Upper lobe of right lung (tissue), 1 donor: ENCODE measurements at regions of chr1 and their contacts with region 1.

Region 1: GRCh38 chr1:108828022-108828961 is 28.6 kb downstream of the AKNAD1 start:
- DNase-seq: peak; percentile 78
- ATAC-seq: peak; percentile 83
- H3K4me3 ChIP-seq: no peak overlapping the region
- H3K27ac ChIP-seq: peak overlapping the region; percentile 56
- H3K4me1 ChIP-seq: peaks cover 25% of the 10 kb centered on the region
- H3K27me3 ChIP-seq: no peaks in the 10 kb centered on the region
- CTCF ChIP-seq: peak; percentile 74

Region 2: DNA sequence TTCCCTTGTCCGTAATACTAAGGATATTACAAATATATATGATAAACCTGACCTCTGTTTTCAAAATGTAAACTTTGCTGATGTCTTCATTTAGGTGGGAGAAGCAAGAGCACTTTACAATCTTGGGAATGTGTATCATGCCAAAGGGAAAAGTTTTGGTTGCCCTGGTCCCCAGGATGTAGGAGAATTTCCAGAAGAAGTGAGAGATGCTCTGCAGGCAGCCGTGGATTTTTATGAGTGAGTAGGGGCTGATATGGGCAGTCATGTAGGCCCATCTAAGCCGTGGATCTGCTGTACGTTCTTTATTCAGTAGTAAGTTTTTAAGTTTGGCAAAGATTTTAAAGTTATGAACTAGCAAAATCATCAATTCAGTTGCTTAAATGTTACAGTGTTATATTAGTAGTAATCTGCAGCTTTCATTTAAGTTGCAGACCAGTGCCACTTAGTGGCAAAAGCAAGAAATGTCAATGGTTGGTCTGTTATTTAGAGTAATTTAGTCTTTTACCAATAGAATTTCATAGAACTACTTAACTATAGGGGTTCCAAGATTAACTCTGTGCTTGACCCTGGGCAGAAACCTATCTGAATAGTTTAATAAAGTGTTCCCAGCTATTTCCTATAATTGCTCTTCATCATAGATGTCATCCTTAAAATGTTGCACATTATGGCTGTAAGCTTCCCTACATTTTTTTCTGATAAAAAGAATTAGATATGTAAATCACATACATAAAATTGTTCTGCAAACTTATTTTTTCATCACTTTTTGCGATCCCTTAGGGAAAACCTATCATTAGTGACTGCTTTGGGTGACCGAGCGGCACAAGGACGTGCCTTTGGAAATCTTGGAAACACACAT is 69.8 kb after region 1 on chr1:
- intact Hi-C with region 1: loop called (anchors 10 kb)
- DNase-seq: no peak
- ATAC-seq: peak; percentile 85
- H3K4me3 ChIP-seq: no peak overlapping the region
- H3K27ac ChIP-seq: no peak overlapping the region
- H3K4me1 ChIP-seq: peaks cover 3% of the 10 kb centered on the region
- H3K27me3 ChIP-seq: no peaks in the 10 kb centered on the region
- CTCF ChIP-seq: peak; percentile 75